ENCODE measurements at regions of chr12 and their contacts with region 1.

Region 1: GRCh38 chr12:53746592-53747092 is 5.1 kb downstream of the CISTR start:
- DNase-seq: peak; percentile 97
- ATAC-seq: peak; percentile 74
- H3K4me3 Mint-ChIP-seq: no peak overlapping the region
- H3K27ac Mint-ChIP-seq: no peak overlapping the region
- H3K4me1 Mint-ChIP-seq: peaks cover 16% of the 10 kb centered on the region
- H3K27me3 Mint-ChIP-seq: peaks cover 15% of the 10 kb centered on the region
- CTCF ChIP-seq: peak; percentile 98

Region 2: GRCh38 chr12:53543539-53543938 is 203.1 kb before region 1 on chr12:
- CTCF ChIA-PET with region 1: interaction called, 23 read pairs
- POLR2A ChIA-PET with region 1: no interaction called
- DNase-seq: peak; percentile 46
- ATAC-seq: peak; percentile 96
- H3K4me3 Mint-ChIP-seq: no peak overlapping the region
- H3K27ac Mint-ChIP-seq: peak overlapping the region; percentile 46
- H3K4me1 Mint-ChIP-seq: peaks cover 8% of the 10 kb centered on the region
- H3K27me3 Mint-ChIP-seq: no peaks in the 10 kb centered on the region
- CTCF ChIP-seq: peak; percentile 22; the same call in 1 of the 2 replicates

Region 3: GRCh38 chr12:53684654-53685220 is 61.9 kb before region 1 on chr12:
- CTCF ChIA-PET with region 1: interaction called, 42 read pairs
- POLR2A ChIA-PET with region 1: no interaction called
- DNase-seq: no peak
- ATAC-seq: peak; percentile 55
- H3K4me3 Mint-ChIP-seq: no peak overlapping the region
- H3K27ac Mint-ChIP-seq: no peak overlapping the region
- H3K4me1 Mint-ChIP-seq: peaks cover 15% of the 10 kb centered on the region
- H3K27me3 Mint-ChIP-seq: no peaks in the 10 kb centered on the region; the same call in 1 of the 2 replicates
- CTCF ChIP-seq: no peak

Region 4: DNA sequence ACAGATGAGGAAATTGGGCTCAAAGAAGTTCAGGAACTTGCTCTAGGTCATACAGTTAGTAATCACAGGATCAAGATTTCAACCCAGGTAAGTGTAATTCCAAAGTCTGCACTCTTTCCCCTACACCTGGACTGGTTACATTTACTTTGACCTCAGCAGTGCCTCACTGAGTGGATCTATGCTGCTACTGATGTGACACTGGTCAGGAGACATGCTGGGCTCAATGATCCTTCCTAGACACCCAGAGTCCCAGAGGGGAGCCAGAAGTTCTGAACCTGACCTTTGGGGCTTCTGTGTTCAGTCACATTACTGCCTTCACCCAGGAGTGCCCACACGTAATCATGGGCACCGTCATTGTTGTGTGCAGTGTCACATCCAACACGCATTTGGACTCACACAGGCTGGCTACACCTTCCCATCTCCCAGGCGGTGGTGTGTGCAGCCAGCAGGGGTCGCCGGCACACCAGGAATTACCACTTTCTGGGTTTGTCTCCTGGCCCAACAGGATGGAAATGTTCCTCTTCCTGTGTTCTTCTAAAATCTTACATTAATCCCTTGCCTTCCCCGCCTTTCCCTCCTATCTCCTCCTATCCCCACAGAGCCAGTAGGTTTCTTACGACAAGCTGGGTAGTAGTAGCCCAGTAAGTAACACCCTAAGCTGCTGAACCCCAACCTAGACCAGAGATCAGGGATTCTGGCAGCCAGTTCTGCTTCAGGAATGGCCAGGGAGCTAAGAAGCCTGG is 45.0 kb before region 1 on chr12:
- CTCF ChIA-PET with region 1: interaction called, 327 read pairs
- POLR2A ChIA-PET with region 1: interaction called, 4 read pairs
- DNase-seq: peak; percentile 90
- ATAC-seq: peak; percentile 94
- H3K4me3 Mint-ChIP-seq: no peak overlapping the region
- H3K27ac Mint-ChIP-seq: no peak overlapping the region
- H3K4me1 Mint-ChIP-seq: peaks cover 21% of the 10 kb centered on the region
- H3K27me3 Mint-ChIP-seq: peaks cover 60% of the 10 kb centered on the region
- CTCF ChIP-seq: peak; percentile 77

Region 5: GRCh38 chr12:53719649-53720048 is 27.0 kb before region 1 on chr12:
- CTCF ChIA-PET with region 1: interaction called, 33 read pairs
- POLR2A ChIA-PET with region 1: no interaction called
- DNase-seq: no peak
- ATAC-seq: peak; percentile 98
- H3K4me3 Mint-ChIP-seq: no peak overlapping the region
- H3K27ac Mint-ChIP-seq: peak overlapping the region; percentile 6; the same call in 1 of the 2 replicates
- H3K4me1 Mint-ChIP-seq: peaks cover 9% of the 10 kb centered on the region
- H3K27me3 Mint-ChIP-seq: no peaks in the 10 kb centered on the region
- CTCF ChIP-seq: no peak

Region 6: GRCh38 chr12:53952871-53953734 is 206.5 kb after region 1 on chr12:
- CTCF ChIA-PET with region 1: interaction called, 19 read pairs
- POLR2A ChIA-PET with region 1: no interaction called
- DNase-seq: peak; percentile 81
- ATAC-seq: peak; percentile 21
- H3K4me3 Mint-ChIP-seq: peak overlapping the region; percentile 23
- H3K27ac Mint-ChIP-seq: no peak overlapping the region
- H3K4me1 Mint-ChIP-seq: peaks cover 28% of the 10 kb centered on the region
- H3K27me3 Mint-ChIP-seq: peaks cover 100% of the 10 kb centered on the region
- CTCF ChIP-seq: no peak

Measured in WTC11 (cell line).